A673 (cell line): ENCODE measurements at regions of chr17 and their contacts with region 1.

Region 1: DNA sequence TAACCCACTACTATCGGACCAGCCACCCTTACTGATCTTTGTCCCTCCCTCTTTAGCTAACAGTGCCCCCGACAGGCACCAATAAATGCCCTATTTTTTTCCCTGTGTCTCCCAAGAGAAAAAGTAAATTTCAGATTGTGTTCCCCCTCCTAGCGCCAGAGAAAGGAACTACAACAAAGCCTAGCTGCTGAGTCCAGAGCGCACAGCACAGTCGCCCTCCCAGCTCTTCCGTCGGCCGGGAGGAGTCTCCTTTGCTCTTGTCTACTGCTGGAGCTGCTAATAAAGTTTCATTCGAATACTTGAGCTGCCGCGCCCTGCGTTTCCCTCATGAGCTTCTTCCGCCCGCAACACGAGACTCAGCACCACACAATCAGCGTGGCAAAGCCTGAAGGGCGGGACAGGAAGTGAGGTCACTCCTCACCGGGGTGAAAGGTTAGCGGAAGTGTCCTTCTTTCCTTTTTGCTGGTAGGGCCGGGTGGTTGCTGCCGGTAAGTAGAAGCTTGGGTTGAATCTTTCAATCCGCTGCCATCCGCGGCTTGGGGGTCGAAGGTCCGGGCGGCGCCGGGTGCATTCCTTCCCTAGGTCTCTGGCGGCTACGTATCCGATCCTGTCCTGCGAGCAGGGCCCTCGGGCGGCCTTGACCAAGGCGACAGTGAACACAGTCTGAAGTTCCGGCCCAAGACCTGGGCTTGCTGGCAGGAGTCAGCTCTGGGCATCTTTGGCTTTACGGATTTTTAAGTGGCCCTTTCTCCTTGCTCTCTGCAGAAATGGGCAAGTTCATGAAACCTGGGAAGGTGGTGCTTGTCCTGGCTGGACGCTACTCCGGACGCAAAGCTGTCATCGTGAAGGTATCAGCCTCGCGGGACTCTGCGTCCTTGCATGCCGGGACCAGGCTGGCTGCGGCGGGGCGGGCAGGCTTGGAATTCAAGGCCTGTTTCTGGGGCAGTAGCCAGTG is at the start of gene RPL27:
- DNase-seq: peak; percentile 98
- H3K4me3 ChIP-seq: peak within 1 kb of the TSS; percentile 92
- H3K27ac ChIP-seq: peak within 1 kb of the TSS; percentile 92
- H3K4me1 ChIP-seq: peaks cover 6% of the 10 kb centered on the region
- H3K27me3 ChIP-seq: no peaks in the 10 kb centered on the region
- CTCF ChIP-seq: peak; percentile 65
- total RNA-seq, gene RPL27: 547 and 560 TPM in 2 replicates

Region 2: GRCh38 chr17:42090964-42091790 is 907.1 kb before region 1 on chr17:
- CTCF ChIA-PET with region 1: no interaction called
- POLR2A ChIA-PET with region 1: interaction called, 12 read pairs
- intact Hi-C with region 1: no loop called
- DNase-seq: no peak
- H3K4me3 ChIP-seq: no peak overlapping the region
- H3K27ac ChIP-seq: no peak overlapping the region
- H3K4me1 ChIP-seq: no peaks in the 10 kb centered on the region
- H3K27me3 ChIP-seq: no peaks in the 10 kb centered on the region
- CTCF ChIP-seq: no peak

Region 3: GRCh38 chr17:42937712-42938596 is 60.3 kb before region 1 on chr17:
- CTCF ChIA-PET with region 1: no interaction called
- POLR2A ChIA-PET with region 1: no interaction called
- intact Hi-C with region 1: no loop called
- DNase-seq: peak; percentile 58
- H3K4me3 ChIP-seq: no peak overlapping the region
- H3K27ac ChIP-seq: no peak overlapping the region
- H3K4me1 ChIP-seq: no peaks in the 10 kb centered on the region
- H3K27me3 ChIP-seq: no peaks in the 10 kb centered on the region
- CTCF ChIP-seq: peak; percentile 56

Region 4: DNA sequence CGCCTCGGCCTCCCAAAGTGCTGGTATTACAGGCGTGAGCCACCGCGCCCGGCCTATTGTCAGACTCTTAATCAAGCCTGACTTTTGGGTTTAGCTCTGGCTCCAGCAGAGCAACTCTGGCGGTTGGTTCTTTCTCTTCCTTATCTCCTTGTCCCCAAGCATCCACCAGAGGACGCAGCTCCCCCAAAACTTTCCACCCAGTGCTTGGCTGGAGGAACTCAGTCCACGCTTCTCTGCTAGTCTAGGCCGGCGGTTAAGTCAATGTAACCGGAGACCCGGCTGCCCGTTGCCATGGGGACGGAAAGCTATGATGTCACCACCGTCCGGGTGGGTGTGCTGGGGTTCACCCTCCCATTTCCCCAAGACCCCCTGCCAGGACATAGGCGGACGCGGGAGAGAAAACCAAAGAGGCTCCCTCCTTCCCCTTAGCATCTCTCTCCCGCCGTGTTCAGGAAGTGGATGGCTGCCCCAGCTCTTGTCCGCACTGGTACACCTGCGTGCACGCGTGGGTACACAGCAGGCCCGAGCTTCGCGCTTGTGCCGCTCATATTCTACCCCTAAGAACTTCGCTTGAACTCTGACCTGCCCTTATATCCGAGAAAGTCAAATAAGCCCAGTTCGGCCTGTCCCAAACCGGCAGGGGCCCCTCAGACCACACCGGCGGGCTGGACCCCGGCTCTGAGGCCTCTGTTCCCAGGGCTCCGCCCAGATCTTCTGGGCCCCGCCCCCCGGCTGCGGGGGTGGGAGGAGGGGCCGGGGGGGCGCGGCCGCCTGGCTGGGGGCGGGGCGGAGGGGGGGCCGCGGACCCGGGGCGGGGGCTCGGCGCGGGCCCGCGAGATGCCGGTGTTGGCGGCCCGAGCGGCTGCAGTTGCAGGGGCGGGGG is 26.4 kb after region 1 on chr17 and contains the start of gene RND2:
- CTCF ChIA-PET with region 1: interaction called, 3 read pairs
- POLR2A ChIA-PET with region 1: interaction called, 17 read pairs
- intact Hi-C with region 1: no loop called
- DNase-seq: peak; percentile 94
- H3K4me3 ChIP-seq: peak within 1 kb of the TSS; percentile 55
- H3K27ac ChIP-seq: peak within 1 kb of the TSS; percentile 77
- H3K4me1 ChIP-seq: no peaks in the 10 kb centered on the region
- H3K27me3 ChIP-seq: no peaks in the 10 kb centered on the region
- CTCF ChIP-seq: peak; percentile 62
- total RNA-seq, gene RND2: 5.5 and 6.7 TPM in 2 replicates